ENCODE measurements at regions of chr2 and their contacts with region 1.

Region 1: GRCh38 chr2:25664183-25664964 is 9.0 kb downstream of the DTNB start:
- DNase-seq: peak; percentile 79
- ATAC-seq: peak; percentile 98
- H3K4me3 ChIP-seq: no peak overlapping the region
- H3K27ac ChIP-seq: peak overlapping the region; percentile 14
- H3K4me1 ChIP-seq: peaks cover 10% of the 10 kb centered on the region
- H3K27me3 ChIP-seq: no peaks in the 10 kb centered on the region
- CTCF ChIP-seq: peak; percentile 89
- EP300 ChIP-seq: no peak
- POLR2A ChIP-seq: no peak
- RAD21 ChIP-seq: peak; percentile 88

Region 2: DNA sequence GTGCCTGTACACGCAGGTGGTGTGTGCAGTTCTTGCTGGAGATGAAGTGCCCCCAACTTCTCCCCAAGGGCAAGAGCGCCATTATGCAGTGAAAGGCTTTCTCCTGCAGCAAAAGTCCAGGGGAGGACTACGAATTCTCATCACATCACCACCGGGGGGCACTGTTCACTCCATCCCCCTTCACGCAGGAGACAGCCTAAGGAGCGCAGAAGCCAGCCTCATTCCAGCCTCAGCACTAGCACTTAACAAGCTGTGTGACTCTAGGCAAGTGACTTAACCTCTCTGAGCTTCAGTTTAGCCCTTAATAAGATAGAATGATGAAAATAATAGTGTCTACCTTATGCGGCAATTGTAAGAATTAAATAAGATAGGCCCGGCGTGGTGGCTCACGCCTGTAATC is 355.0 kb before region 1 on chr2:
- CTCF ChIA-PET with region 1: no interaction called
- POLR2A ChIA-PET with region 1: no interaction called
- in situ Hi-C with region 1: no loop called
- intact Hi-C with region 1: loop called (anchors 1 kb)
- DNase-seq: peak; percentile 59
- ATAC-seq: peak; percentile 68
- H3K4me3 ChIP-seq: no peak overlapping the region
- H3K27ac ChIP-seq: no peak overlapping the region
- H3K4me1 ChIP-seq: peaks cover 20% of the 10 kb centered on the region
- H3K27me3 ChIP-seq: no peaks in the 10 kb centered on the region
- CTCF ChIP-seq: peak; percentile 74
- EP300 ChIP-seq: no peak
- POLR2A ChIP-seq: no peak
- RAD21 ChIP-seq: peak; percentile 60; the same call in 1 of the 2 replicates

Region 3: DNA sequence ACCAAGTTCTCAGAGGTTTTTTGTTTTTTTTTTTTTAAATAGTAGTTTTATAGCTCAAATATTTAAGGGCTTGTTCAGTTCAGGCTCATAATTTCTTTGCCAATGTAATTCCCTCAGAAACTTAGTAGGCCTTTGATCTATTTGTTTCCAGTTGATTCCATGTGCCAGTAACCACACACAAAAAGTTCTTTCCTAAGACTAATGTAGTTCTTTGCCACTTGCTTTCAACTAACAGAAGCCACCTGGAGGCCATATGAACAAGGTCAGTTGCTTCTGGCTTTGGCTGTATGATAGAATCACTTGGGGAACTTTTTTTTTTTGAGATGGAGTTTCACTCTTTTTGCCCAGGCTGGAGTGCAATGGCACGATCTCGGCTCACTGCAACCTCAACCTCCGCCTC is 91.7 kb before region 1 on chr2:
- CTCF ChIA-PET with region 1: no interaction called
- POLR2A ChIA-PET with region 1: no interaction called
- in situ Hi-C with region 1: no loop called
- intact Hi-C with region 1: no loop called
- DNase-seq: no peak
- ATAC-seq: no peak
- H3K4me3 ChIP-seq: no peak overlapping the region
- H3K27ac ChIP-seq: no peak overlapping the region
- H3K4me1 ChIP-seq: no peaks in the 10 kb centered on the region
- H3K27me3 ChIP-seq: no peaks in the 10 kb centered on the region
- CTCF ChIP-seq: no peak
- EP300 ChIP-seq: no peak
- POLR2A ChIP-seq: no peak
- RAD21 ChIP-seq: no peak

Region 4: GRCh38 chr2:25606892-25607291 is 57.5 kb before region 1 on chr2:
- CTCF ChIA-PET with region 1: interaction called, 65 read pairs
- POLR2A ChIA-PET with region 1: interaction called, 4 read pairs
- in situ Hi-C with region 1: loop called (anchors 5 kb)
- intact Hi-C with region 1: loop called (anchors 1 kb)
- DNase-seq: peak; percentile 46
- ATAC-seq: 0 out of 3 replicates have a peak, but pooled peaks have one; percentile 38
- H3K4me3 ChIP-seq: no peak overlapping the region
- H3K27ac ChIP-seq: no peak overlapping the region
- H3K4me1 ChIP-seq: peaks cover 15% of the 10 kb centered on the region
- H3K27me3 ChIP-seq: no peaks in the 10 kb centered on the region
- CTCF ChIP-seq: peak; percentile 74
- EP300 ChIP-seq: no peak
- POLR2A ChIP-seq: no peak
- RAD21 ChIP-seq: peak; percentile 73

Region 5: GRCh38 chr2:25635797-25636196 is 28.6 kb before region 1 on chr2:
- CTCF ChIA-PET with region 1: no interaction called
- POLR2A ChIA-PET with region 1: no interaction called
- in situ Hi-C with region 1: no loop called
- intact Hi-C with region 1: loop called (anchors 1 kb)
- DNase-seq: no peak
- ATAC-seq: no peak
- H3K4me3 ChIP-seq: no peak overlapping the region
- H3K27ac ChIP-seq: no peak overlapping the region
- H3K4me1 ChIP-seq: no peaks in the 10 kb centered on the region
- H3K27me3 ChIP-seq: no peaks in the 10 kb centered on the region
- CTCF ChIP-seq: no peak
- EP300 ChIP-seq: no peak
- POLR2A ChIP-seq: no peak
- RAD21 ChIP-seq: no peak

Region 6: GRCh38 chr2:25651071-25651470 is 13.3 kb before region 1 on chr2:
- CTCF ChIA-PET with region 1: no interaction called
- POLR2A ChIA-PET with region 1: no interaction called
- in situ Hi-C with region 1: no loop called
- intact Hi-C with region 1: no loop called
- DNase-seq: no peak
- ATAC-seq: no peak
- H3K4me3 ChIP-seq: no peak overlapping the region
- H3K27ac ChIP-seq: no peak overlapping the region
- H3K4me1 ChIP-seq: peaks cover 14% of the 10 kb centered on the region
- H3K27me3 ChIP-seq: no peaks in the 10 kb centered on the region
- CTCF ChIP-seq: no peak
- EP300 ChIP-seq: no peak
- POLR2A ChIP-seq: no peak
- RAD21 ChIP-seq: no peak

Region 7: DNA sequence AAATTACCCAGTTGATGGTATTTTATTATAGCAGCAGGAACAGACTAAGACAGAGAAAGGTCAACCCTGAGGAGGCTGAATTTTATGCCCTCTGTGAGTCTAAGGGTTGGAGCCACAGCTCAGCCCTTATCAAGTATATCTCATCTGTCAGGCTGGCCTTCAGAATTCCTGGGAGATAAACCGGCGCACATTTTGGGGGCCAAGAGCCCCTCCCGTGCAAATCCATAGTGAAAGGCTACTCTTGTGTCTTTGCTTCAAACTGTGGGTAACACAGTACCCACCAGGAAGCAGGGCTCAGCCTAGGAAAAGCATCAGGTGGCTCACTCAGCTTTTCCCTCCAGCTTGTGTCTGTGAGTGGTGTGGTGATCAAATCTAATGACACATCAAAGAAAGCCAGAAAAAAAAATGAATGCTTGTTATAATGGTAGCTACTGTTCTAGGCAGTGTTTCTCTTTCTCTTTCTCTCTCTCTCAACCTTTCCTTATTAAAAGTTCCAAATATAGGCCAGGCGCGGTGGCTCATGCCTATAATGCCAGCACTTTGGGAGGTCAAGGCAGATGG is 238.9 kb after region 1 on chr2:
- CTCF ChIA-PET with region 1: no interaction called
- POLR2A ChIA-PET with region 1: no interaction called
- in situ Hi-C with region 1: no loop called
- intact Hi-C with region 1: no loop called
- DNase-seq: no peak
- ATAC-seq: no peak; the same call in 2 of the 3 replicates
- H3K4me3 ChIP-seq: no peak overlapping the region
- H3K27ac ChIP-seq: no peak overlapping the region
- H3K4me1 ChIP-seq: no peaks in the 10 kb centered on the region
- H3K27me3 ChIP-seq: no peaks in the 10 kb centered on the region
- CTCF ChIP-seq: no peak
- EP300 ChIP-seq: no peak
- POLR2A ChIP-seq: no peak
- RAD21 ChIP-seq: no peak